ENCODE measurements at regions of chr7 and their contacts with region 1.

Region 1: GRCh38 chr7:98168181-98168905 is 42.9 kb upstream of the BHLHA15 start:
- DNase-seq: no peak
- H3K4me3 ChIP-seq: no peak overlapping the region
- H3K27me3 ChIP-seq: no peaks in the 10 kb centered on the region
- CTCF ChIP-seq: peak; percentile 82

Region 2: GRCh38 chr7:98021588-98022351 is 146.6 kb before region 1 on chr7:
- CTCF ChIA-PET with region 1: interaction called, 291 read pairs
- POLR2A ChIA-PET with region 1: no interaction called
- DNase-seq: no peak
- H3K4me3 ChIP-seq: no peak overlapping the region
- H3K27me3 ChIP-seq: no peaks in the 10 kb centered on the region; the same call in 1 of the 2 replicates
- CTCF ChIP-seq: peak; percentile 98

Region 3: DNA sequence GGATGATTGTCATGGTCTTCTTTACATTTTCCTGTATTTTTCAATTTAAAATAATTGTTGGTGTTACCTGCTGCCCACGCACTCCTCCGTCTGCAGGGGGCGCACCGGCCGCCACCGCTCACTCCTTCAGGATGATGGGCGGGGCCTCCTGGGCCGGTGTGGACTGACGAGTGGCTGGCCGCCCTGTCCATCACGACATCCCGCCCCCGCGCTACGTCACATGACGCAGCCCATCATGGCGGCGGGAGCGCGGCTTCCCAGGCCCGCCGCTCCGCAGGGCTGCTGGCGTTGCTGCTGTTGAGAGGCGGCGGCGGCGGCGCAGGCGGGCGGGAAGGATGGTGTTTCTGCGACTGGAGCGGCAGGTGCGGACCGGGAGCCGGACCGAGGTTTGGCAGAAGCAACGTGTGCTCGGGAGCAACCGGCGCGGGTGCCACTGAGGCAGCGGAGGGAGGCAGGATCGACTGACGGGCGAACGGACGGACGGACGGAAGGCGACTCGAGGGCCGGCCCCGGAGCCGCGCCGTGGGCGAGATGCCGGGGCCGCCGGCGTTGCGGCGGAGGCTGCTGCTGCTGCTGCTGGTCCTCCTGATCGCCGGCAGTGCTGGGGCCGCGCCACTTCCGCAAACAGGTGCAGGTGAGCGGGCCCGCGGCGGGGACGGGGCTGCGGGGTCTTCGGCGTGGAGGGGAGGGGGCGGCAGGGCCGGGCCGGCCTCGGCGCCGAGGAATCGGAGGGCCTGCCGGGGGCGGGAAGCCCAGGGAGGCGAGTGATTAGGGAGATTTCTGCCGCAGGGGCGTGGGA is 61.5 kb before region 1 on chr7 and contains the start of gene LMTK2:
- CTCF ChIA-PET with region 1: interaction called, 102 read pairs
- POLR2A ChIA-PET with region 1: no interaction called
- DNase-seq: peak; percentile 38
- H3K4me3 ChIP-seq: peak within 1 kb of the TSS; percentile 89
- H3K27me3 ChIP-seq: no peaks in the 10 kb centered on the region
- CTCF ChIP-seq: peak; percentile 96
- polyA plus RNA-seq, gene LMTK2: 3.0 and 3.8 TPM in 2 replicates

Region 4: GRCh38 chr7:98119256-98119918 is 49.0 kb before region 1 on chr7:
- CTCF ChIA-PET with region 1: interaction called, 15 read pairs
- POLR2A ChIA-PET with region 1: no interaction called
- DNase-seq: peak; percentile 24
- H3K4me3 ChIP-seq: no peak overlapping the region
- H3K27me3 ChIP-seq: no peaks in the 10 kb centered on the region
- CTCF ChIP-seq: no peak

Region 5: GRCh38 chr7:98178347-98178746 is 10.0 kb after region 1 on chr7:
- CTCF ChIA-PET with region 1: interaction called, 50 read pairs
- POLR2A ChIA-PET with region 1: no interaction called
- DNase-seq: no peak
- H3K4me3 ChIP-seq: no peak overlapping the region
- H3K27me3 ChIP-seq: no peaks in the 10 kb centered on the region
- CTCF ChIP-seq: no peak

Region 6: GRCh38 chr7:98223898-98224840 is 55.8 kb after region 1 on chr7:
- CTCF ChIA-PET with region 1: no interaction called
- POLR2A ChIA-PET with region 1: no interaction called
- DNase-seq: no peak
- H3K4me3 ChIP-seq: no peak overlapping the region
- H3K27me3 ChIP-seq: no peaks in the 10 kb centered on the region
- CTCF ChIP-seq: no peak

Region 7: GRCh38 chr7:98294796-98295382 is 126.5 kb after region 1 on chr7:
- CTCF ChIA-PET with region 1: no interaction called
- POLR2A ChIA-PET with region 1: no interaction called
- DNase-seq: no peak
- H3K4me3 ChIP-seq: no peak overlapping the region
- H3K27me3 ChIP-seq: no peaks in the 10 kb centered on the region
- CTCF ChIP-seq: peak; percentile 81

Measured in BJ (cell line).